ENCODE measurements at regions of chr15 and their contacts with region 1.

Region 1: DNA sequence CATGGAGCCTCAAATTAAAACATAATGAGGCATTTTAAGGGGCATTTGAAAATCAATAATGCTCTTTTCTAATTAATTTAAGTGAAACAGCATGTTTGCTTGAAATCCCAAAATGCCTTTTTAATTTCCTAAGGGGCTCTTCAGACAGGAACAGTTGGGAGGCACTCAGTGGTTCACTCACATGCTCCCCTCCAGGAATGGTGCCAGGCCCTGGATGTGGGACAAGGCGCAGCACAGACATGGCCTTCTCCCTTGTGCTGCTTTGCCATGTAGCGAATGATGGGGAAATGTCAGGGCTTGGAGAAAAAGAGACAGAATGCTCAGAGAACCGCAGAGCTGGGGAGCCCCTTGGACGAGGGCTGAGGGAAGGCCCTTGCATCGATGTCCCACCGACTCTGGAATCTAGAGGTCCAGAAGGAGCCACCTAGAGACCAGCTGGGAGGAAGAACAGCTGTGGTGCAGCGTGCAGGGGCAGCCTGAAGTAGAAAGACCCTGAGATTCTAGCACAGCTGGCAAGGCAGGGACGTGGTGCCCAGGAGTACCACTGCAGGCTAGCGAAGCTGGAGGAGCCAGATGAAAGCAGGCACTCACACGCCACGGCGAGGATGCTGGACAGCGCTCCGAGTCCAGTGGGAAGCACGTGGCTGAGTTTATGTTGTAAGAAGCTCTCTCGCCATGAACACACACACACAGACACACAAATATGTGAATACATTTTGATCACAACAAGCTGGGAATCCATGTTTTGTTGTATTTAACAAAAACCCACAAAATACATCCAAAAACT is 27.0 kb downstream of the NSMCE3 start:
- DNase-seq: no peak
- ATAC-seq: no peak
- H3K4me3 ChIP-seq: no peak overlapping the region
- H3K27ac ChIP-seq: no peak overlapping the region
- H3K4me1 ChIP-seq: no peaks in the 10 kb centered on the region
- H3K27me3 ChIP-seq: peaks cover 0 to 6% (median 0%) of the 10 kb centered on the region in 9 donors
- CTCF ChIP-seq: no peak
- POLR2A ChIP-seq: no peak

Region 2: GRCh38 chr15:29183071-29183831 is 59.4 kb before region 1 on chr15:
- intact Hi-C with region 1: loop called in 1 of 10 experiments (anchors 10 kb)
- DNase-seq: no peak
- ATAC-seq: no peak
- H3K4me3 ChIP-seq: no peak overlapping the region
- H3K27ac ChIP-seq: no peak overlapping the region
- H3K4me1 ChIP-seq: no peaks in the 10 kb centered on the region
- H3K27me3 ChIP-seq: peaks cover 0 to 7% (median 0%) of the 10 kb centered on the region in 9 donors
- CTCF ChIP-seq: no peak
- POLR2A ChIP-seq: no peak

Region 3: DNA sequence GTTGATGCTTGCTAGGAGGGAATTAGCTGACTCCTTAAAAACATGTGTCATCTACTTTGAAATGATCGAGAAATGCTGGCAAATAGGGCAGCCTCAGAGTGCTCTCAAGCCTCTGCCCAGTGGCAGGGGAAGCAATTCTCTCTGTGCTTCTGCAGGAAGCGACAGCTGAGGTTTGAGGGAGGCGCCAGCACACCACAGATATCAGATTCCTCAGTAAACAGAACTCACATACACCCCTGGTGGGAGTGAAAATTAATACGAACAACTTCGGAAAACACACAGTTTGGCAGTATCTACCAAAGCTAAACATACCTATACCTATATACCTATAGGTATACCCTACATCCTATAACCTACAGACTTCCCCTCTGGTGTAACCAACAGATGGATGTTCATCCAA is 34.3 kb before region 1 on chr15:
- intact Hi-C with region 1: no loop called
- DNase-seq: no peak
- ATAC-seq: no peak
- H3K4me3 ChIP-seq: no peak overlapping the region
- H3K27ac ChIP-seq: no peak overlapping the region
- H3K4me1 ChIP-seq: no peaks in the 10 kb centered on the region
- H3K27me3 ChIP-seq: peaks cover 0 to 23% (median 0%) of the 10 kb centered on the region in 9 donors
- CTCF ChIP-seq: no peak
- POLR2A ChIP-seq: no peak